ENCODE measurements at regions of chr4 and their contacts with region 1.

Region 1: GRCh38 chr4:152735396-152735859 is 44.1 kb downstream of the TIGD4 start:
- H3K4me3 Mint-ChIP-seq: no peak overlapping the region
- H3K27ac Mint-ChIP-seq: no peak overlapping the region
- H3K4me1 Mint-ChIP-seq: peaks cover 19% of the 10 kb centered on the region
- H3K27me3 Mint-ChIP-seq: peaks cover 3% of the 10 kb centered on the region

Region 2: DNA sequence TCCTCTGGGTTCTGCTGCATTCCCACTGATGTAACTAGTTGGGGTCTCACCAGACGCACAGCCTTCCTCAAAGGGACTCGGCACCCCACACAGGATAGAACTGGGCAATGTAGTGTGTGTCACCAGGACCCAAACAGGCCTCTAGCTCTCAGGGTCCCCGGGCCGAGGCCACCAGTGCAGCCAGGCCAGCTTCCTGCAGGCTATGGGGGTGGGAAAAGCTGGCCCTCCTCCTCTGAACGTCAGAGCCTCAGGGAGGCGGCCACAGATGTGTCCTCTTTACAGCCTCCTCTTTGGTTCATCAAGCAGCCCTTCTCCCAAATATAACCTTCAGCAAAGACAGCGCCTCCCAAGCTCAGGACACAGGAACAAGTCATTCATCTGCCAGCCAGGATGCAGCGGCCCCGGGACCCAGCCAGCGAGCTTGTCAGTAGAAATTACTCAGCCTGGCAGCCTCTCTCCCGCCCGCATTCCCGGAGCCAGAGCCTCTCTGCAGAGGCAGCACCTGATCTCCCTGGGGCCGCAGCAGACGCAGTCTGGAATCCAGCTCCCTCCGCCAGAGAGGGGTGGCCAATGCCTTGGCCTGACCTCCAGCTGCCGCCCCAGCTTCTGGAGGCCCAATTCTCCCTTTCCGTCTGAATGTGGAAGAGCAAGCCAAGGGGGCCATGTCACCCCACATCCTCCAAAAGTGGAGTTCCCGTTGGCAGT is 488.0 kb before region 1 on chr4:
- intact Hi-C with region 1: no loop called
- H3K4me3 Mint-ChIP-seq: no peak overlapping the region
- H3K27ac Mint-ChIP-seq: peak overlapping the region; percentile 26
- H3K4me1 Mint-ChIP-seq: peaks cover 20% of the 10 kb centered on the region
- H3K27me3 Mint-ChIP-seq: peaks cover 6% of the 10 kb centered on the region

Region 3: DNA sequence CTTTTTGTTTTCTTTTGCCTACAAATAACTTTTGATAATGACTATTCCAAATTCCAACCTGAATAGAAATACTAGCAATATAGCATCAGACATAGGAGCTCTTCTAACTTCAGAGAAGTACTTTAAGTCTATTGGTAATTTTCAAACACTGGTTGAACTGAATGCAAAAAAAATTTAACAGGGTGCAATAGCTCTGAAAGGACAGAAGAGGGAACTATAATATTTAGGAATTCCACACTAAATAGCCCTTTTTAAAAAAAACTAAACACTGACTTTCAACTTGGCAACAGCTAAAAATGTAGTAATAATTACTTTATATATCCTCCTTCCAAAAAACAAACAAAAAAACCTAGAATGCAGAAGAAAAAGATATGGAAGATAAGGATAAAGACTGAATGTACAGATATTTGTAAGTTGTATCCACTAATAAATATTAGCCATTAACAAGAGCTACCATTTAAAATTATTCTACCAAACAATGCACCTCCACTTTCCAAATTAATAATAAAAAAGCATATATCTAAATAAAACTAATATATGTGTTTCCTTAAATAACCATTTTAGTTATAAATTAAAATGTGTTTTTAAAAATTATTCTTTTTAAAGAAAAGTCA is 280.9 kb before region 1 on chr4:
- intact Hi-C with region 1: loop called (anchors 2 kb)
- H3K4me3 Mint-ChIP-seq: no peak overlapping the region
- H3K27ac Mint-ChIP-seq: no peak overlapping the region
- H3K4me1 Mint-ChIP-seq: peaks cover 28% of the 10 kb centered on the region
- H3K27me3 Mint-ChIP-seq: no peaks in the 10 kb centered on the region

Region 4: GRCh38 chr4:152500800-152501434 is 234.5 kb before region 1 on chr4:
- intact Hi-C with region 1: loop called (anchors 1 kb)
- H3K4me3 Mint-ChIP-seq: no peak overlapping the region
- H3K27ac Mint-ChIP-seq: no peak overlapping the region
- H3K4me1 Mint-ChIP-seq: peaks cover 20% of the 10 kb centered on the region
- H3K27me3 Mint-ChIP-seq: no peaks in the 10 kb centered on the region

Region 5: DNA sequence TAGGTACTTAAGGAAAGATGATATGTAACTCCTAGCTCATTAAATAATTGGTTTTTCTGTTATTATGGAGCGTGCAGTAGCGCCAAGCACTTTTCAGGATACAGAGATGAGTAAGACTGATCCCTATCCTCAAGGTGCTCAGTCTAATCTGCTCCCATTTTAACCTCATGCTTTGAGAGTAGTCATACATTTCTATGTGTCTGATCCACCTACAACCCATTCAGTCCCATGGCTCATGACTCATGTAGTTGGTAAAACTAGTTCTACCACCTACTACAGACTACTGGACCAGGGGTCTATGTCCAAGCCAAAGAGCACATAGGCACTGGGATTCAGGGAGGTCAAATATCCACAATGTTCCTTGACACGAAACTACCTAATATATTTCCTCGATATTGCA is 116.5 kb before region 1 on chr4:
- intact Hi-C with region 1: no loop called
- H3K4me3 Mint-ChIP-seq: no peak overlapping the region
- H3K27ac Mint-ChIP-seq: no peak overlapping the region
- H3K4me1 Mint-ChIP-seq: peaks cover 8% of the 10 kb centered on the region
- H3K27me3 Mint-ChIP-seq: peaks cover 2% of the 10 kb centered on the region

Region 6: DNA sequence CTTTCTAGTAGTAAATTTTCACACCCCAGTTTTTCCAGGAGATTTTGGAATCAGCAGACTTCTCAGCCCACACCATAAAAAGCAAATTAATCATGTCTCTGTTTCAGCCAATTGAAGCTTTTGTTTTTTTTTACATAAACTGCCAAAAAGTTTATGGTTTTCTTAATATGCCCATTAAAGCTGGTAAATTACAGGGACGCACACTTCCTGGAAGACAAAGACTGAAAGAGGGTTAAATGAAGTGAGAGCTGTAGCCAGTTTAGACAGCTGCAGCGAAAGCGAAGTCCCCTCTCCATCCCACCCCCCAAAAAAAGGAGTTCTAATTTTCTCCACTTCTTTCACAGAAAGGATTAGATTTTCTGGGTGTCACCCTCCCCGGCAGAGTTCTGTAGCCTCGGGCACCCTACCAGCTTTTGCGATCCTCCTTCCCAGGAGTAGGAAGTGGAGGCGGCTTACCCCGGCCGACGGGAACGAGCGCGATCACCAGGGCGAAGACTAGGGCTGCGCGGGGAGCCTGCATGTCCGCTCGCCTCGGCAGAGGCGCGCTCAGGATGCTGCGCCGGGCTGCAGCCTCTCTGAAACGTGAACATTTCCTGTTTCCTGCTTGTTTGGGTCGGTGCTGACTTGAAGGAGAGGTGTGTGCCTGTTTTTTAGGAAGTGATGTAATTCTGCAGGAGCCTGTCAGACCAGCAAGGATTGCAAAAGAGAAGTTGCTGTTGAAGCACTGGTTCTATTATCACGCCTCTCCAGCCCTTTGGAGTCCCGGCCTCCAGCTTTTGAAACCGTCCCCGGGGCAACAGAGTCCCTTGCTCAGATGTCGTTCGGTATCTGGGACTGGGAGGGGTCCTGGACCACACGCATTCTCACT is 55.8 kb before region 1 on chr4 and contains the start of gene TMEM154:
- intact Hi-C with region 1: loop called (anchors 10 kb)
- H3K4me3 Mint-ChIP-seq: peak within 1 kb of the TSS; percentile 82
- H3K27ac Mint-ChIP-seq: peak within 1 kb of the TSS; percentile 86
- H3K4me1 Mint-ChIP-seq: peaks cover 38% of the 10 kb centered on the region
- H3K27me3 Mint-ChIP-seq: no peaks in the 10 kb centered on the region

Measured in dendritic cell treated with granulocyte-macrophage colony-stimulating factor and Interleukin-4, amounts not matched to agents 40 ng/mL and 50 ng/mL, for 4 days (primary cell).